Heart right ventricle (tissue), 16 donors: ENCODE measurements at regions of chr12 and their contacts with region 1.

Region 1: DNA sequence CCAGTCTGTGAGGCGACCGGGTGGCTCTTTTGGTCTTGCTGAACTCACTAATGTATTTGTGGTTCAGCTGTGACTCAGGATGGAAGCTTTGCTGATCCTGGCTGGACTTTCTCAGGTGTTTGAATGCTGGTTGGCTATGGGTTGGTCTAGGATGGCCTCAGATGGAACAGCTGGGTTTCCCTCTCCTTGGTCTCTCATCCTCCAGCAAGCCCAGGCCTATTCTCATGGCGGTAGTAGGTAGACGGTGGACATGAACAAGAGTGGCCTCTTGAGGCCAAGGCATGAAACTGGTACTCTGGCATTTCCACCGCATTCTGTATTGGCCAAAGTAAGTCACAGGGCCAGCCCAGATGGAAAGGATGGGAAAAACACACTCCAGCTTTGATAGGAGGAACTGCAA is 11.8 kb upstream of the POLR3B start:
- DNase-seq: peak in 1 of 2 donors; percentile 22
- ATAC-seq: peak; percentile 32 to 66 (median 52)
- H3K4me3 ChIP-seq: no peak overlapping the region
- H3K27ac ChIP-seq: peak overlapping the region in 2 of 10 donors; percentile 12 to 81
- H3K4me1 ChIP-seq: peaks cover 15 to 46% (median 35%) of the 10 kb centered on the region in 9 donors
- H3K27me3 ChIP-seq: no peaks in the 10 kb centered on the region
- CTCF ChIP-seq: peak; percentile 21 to 63 (median 49)

Region 2: GRCh38 chr12:105409801-105410471 is 935.8 kb before region 1 on chr12:
- intact Hi-C with region 1: loop called in 1 of 10 experiments (anchors 10 kb)
- DNase-seq: peak; percentile 37 to 83
- ATAC-seq: peak; percentile 59 to 95 (median 90)
- H3K4me3 ChIP-seq: no peak overlapping the region
- H3K27ac ChIP-seq: peak overlapping the region in 3 of 10 donors; percentile 43 to 72 (median 59)
- H3K4me1 ChIP-seq: peaks cover 0 to 33% (median 24%) of the 10 kb centered on the region in 9 donors
- H3K27me3 ChIP-seq: no peaks in the 10 kb centered on the region
- CTCF ChIP-seq: no peak

Region 3: DNA sequence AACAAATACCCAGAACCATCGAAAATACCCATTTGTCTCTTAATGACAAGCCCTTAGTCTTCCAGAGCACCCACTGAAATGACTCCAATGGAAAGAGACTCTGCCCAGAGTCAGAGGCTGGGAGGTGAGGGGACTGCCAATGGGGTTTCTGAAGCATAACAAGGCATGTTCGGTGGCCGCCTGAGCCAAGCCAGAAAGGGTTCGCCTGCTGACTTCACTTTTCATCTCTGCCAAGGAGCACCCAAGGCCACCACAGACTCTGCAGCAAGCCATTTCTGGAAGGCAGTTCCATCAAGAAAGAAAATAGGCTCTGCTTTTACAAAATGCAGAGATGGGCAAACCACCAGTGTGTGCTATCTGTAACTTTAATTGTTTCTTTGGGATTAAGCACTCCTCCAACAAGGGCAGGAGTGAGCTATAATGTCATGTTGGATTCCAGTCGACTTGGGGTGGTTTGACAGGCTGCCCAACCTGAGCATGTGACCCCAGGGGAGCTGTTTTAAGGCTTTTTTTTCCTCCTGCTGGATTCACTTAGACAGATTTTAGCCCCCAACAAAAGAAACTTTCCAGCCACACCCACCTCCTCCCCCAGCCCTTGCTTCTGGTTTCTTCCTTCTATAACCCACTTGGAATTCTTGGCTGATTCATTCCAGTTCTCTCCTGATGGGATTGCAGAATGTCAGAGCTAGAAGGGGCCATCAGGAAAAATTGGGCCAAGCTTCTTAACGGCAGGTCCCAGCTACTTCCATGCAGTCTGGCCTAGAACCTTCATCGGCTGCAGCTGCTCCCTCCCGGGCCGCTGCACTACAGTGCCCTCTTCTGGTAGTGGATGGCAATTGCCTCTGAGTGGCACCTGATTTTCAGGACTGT is 122.0 kb before region 1 on chr12:
- intact Hi-C with region 1: loop called in 7 of 10 experiments (anchors 1 to 5 kb)
- DNase-seq: peak; percentile 60 to 68
- ATAC-seq: peak; percentile 59 to 86 (median 74)
- H3K4me3 ChIP-seq: no peak overlapping the region
- H3K27ac ChIP-seq: peak overlapping the region in 1 of 10 donors; percentile 24
- H3K4me1 ChIP-seq: peaks cover 0 to 22% (median 7%) of the 10 kb centered on the region in 9 donors
- H3K27me3 ChIP-seq: no peaks in the 10 kb centered on the region
- CTCF ChIP-seq: peak; percentile 93 to 97 (median 95)

Region 4: DNA sequence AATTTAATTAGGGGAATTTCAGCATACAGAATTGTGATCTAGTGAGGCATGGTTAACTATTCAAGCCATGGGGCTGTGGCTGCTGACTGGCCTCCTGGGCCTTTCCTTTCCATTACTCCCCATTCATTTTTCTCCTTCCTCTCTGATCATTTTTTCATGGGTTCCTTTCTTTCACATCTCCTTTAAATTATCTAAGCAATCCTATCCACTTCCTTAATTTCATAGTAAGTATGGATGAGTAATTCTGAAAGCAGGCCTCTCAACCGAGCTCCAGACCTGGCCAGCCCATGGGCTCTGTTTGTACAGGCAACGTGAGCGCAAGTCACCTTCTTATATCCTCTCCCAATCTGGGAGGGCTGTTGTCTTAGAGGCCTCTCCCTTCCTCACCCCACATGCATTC is 111.3 kb before region 1 on chr12:
- intact Hi-C with region 1: loop called in 8 of 10 experiments (anchors 2 to 5 kb)
- DNase-seq: no peak
- ATAC-seq: no peak
- H3K4me3 ChIP-seq: no peak overlapping the region
- H3K27ac ChIP-seq: no peak overlapping the region
- H3K4me1 ChIP-seq: peaks cover 3 to 20% (median 7%) of the 10 kb centered on the region in 9 donors
- H3K27me3 ChIP-seq: no peaks in the 10 kb centered on the region
- CTCF ChIP-seq: no peak

Region 5: GRCh38 chr12:106247674-106248311 is 97.9 kb before region 1 on chr12 and contains the start of gene CKAP4:
- intact Hi-C with region 1: loop called in 4 of 10 experiments (anchors 5 kb)
- DNase-seq: peak; percentile 77 to 86
- ATAC-seq: peak; percentile 76 to 92 (median 84)
- H3K4me3 ChIP-seq: peak within 1 kb of the TSS; percentile 67 to 98 (median 89)
- H3K27ac ChIP-seq: peak within 1 kb of the TSS; percentile 97 to 100 (median 99)
- H3K4me1 ChIP-seq: peaks cover 14 to 61% (median 48%) of the 10 kb centered on the region in 9 donors
- H3K27me3 ChIP-seq: no peaks in the 10 kb centered on the region
- CTCF ChIP-seq: no peak
- total RNA-seq, gene CKAP4: 38.5 to 63.2 (median 47.9) TPM

Region 6: DNA sequence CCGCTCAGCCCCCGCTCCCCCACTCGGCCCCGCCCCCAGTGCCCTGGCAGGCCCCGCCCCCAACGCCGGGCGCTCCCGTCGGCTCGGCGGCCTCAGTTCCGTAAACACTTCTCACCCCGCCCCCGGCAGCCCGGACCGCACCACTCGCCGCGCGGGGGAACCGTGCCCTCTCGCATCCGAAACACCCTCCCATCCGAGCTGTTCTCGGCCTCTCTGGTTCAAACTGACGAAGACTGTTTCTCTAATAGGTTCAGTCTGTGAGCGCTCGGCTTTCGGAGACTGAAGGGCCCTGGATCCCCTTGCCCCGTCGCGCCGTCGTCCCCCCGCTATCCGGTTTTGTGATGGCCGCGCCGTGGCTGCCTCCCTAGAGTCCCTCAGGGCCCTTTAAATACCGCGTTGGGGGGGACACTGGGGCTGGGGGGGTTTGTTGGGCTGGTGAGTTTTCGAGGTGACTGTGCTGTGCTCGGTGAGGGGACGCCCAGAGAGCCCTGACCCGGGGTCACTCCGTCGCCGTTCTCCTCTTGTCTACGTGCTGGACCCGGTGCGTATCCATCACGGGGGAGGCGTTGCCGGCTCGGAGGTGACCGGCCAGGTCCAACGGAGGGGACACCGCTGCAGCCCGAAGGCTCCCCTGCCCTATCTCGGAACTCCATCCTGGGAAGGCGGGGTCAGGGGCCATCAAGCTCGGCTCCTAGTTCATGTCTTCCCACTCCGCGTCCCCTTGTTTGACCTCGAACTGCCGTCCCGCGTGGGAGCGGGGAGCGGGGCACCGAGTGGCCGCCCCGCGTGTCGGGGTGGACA is 43.1 kb before region 1 on chr12 and contains the start of gene TCP11L2:
- intact Hi-C with region 1: loop called in 6 of 10 experiments (anchors 5 to 10 kb)
- DNase-seq: peak; percentile 93
- ATAC-seq: peak; percentile 83 to 90 (median 86)
- H3K4me3 ChIP-seq: peak within 1 kb of the TSS; percentile 56 to 96 (median 84)
- H3K27ac ChIP-seq: peak within 1 kb of the TSS; percentile 88 to 98 (median 98)
- H3K4me1 ChIP-seq: peaks cover 7 to 74% (median 68%) of the 10 kb centered on the region in 9 donors
- H3K27me3 ChIP-seq: no peaks in the 10 kb centered on the region
- CTCF ChIP-seq: no peak
- total RNA-seq, gene TCP11L2: 77.6 to 168 (median 120) TPM

Region 7: GRCh38 chr12:106309671-106310505 is 35.9 kb before region 1 on chr12:
- intact Hi-C with region 1: loop called in 4 of 10 experiments (anchors 5 to 10 kb)
- DNase-seq: no peak
- ATAC-seq: peak in 6 of 8 donors; percentile 19 to 54 (median 47)
- H3K4me3 ChIP-seq: no peak overlapping the region
- H3K27ac ChIP-seq: peak overlapping the region in 6 of 10 donors; percentile 41 to 63 (median 51)
- H3K4me1 ChIP-seq: peaks cover 0 to 77% (median 69%) of the 10 kb centered on the region in 9 donors
- H3K27me3 ChIP-seq: no peaks in the 10 kb centered on the region
- CTCF ChIP-seq: no peak

Region 8: DNA sequence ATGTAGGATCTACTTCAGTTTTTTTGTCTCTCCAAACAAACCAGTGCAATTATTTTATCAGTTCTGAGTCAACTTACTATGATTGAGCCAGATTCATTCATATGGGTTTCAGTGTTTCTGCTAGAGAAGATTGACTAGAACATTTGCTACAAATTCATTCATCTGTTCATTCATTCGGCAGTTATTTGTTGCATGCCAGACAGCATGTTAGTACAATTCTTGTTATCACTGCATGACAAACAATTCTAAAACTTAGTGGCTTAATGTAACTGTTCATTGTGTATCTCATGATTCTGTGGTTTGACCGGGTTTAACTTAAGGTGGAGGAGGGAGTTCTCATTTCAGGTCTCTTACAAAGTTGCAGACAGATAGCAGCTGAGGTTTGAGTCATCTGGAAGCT is 64.1 kb after region 1 on chr12:
- intact Hi-C with region 1: no loop called
- DNase-seq: no peak
- ATAC-seq: no peak
- H3K4me3 ChIP-seq: no peak overlapping the region
- H3K27ac ChIP-seq: no peak overlapping the region
- H3K4me1 ChIP-seq: no peaks in the 10 kb centered on the region
- H3K27me3 ChIP-seq: no peaks in the 10 kb centered on the region
- CTCF ChIP-seq: no peak